ENCODE measurements at regions of chr3 and their contacts with region 1.

Region 1: GRCh38 chr3:107927361-107928083 is 163.3 kb downstream of the CD47 start:
- DNase-seq: peak; percentile 77
- ATAC-seq: peak; percentile 94
- H3K4me3 Mint-ChIP-seq: peak overlapping the region; percentile 81
- H3K27ac Mint-ChIP-seq: no peak overlapping the region
- H3K4me1 Mint-ChIP-seq: peaks cover 8% of the 10 kb centered on the region
- H3K27me3 Mint-ChIP-seq: peaks cover 18% of the 10 kb centered on the region
- CTCF ChIP-seq: peak; percentile 77

Region 2: DNA sequence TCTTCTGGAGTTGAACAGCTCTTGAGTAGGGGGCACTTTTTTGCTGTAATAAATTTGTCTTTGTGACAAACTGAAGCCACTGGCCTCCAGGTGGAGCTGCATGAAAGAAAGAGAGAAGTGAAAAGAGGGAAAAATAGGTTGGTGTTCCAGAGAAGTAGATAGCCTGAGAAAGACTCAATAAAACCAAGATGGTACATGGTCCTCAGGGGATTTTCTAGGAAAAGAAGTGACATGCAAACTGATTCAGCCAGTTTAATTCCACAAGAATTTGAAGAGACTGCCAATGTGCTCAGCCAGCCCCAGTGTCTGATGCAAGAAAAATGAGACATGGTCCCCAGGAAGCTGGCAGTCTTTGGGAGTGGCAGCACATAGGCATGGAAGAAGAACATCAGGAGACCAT is 10.6 kb after region 1 on chr3:
- CTCF ChIA-PET with region 1: interaction called, 26 read pairs
- POLR2A ChIA-PET with region 1: no interaction called
- DNase-seq: peak; percentile 32
- ATAC-seq: peak; percentile 59; the same call in 1 of the 2 replicates
- H3K4me3 Mint-ChIP-seq: no peak overlapping the region
- H3K27ac Mint-ChIP-seq: no peak overlapping the region
- H3K4me1 Mint-ChIP-seq: peaks cover 10% of the 10 kb centered on the region
- H3K27me3 Mint-ChIP-seq: no peaks in the 10 kb centered on the region
- CTCF ChIP-seq: 0 out of 2 replicates have a peak, but pooled peaks have one; percentile 18